ENCODE measurements at regions of chr12 and their contacts with region 1.

Region 1: GRCh38 chr12:113098446-113098896 is 37.1 kb downstream of the RASAL1 start:
- DNase-seq: peak; percentile 83
- CTCF ChIP-seq: peak; percentile 88

Region 2: DNA sequence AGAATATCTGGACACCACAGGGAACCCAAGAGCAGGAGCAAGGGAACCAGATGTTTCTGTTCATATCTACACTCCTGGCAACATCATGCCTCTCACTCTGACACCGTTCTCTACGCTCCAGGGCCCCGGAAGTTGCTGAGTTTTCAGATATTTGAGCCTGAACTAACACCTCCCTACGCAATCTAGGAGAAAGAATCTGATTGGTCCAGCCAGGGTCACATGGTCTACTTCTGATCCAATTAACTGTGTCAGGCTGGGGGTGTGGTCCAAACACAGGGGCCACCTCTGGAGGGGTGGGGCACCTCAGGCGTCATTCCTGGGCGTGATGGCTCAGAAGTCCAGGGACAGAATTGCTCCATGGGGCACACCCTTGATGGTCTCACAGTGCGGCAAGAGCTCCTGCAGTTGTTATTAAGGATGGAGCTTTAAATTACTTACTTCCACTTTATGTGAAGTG is 514.2 kb before region 1 on chr12:
- CTCF ChIA-PET with region 1: no interaction called
- POLR2A ChIA-PET with region 1: no interaction called
- DNase-seq: no peak
- CTCF ChIP-seq: no peak

Region 3: GRCh38 chr12:112950701-112951100 is 147.8 kb before region 1 on chr12:
- CTCF ChIA-PET with region 1: no interaction called
- POLR2A ChIA-PET with region 1: no interaction called
- DNase-seq: no peak
- CTCF ChIP-seq: no peak

Region 4: DNA sequence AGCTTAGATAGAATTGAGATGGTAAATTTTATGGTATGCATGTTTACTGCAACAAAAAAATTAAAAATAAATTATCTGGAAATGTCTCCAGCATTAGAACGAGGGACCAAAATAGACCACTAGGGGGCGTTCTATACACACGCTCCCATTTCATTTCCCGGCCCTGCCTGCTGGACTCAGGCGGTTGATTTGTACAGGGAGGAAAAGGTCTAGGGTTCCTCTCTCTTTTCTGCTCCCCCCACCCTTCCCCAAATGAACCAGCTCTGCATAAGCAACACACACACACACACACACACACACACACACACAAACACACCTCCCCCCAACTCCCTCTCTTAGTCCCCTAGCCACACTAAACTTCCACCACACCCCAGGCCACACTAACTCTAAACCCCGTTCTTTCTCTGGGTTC is 49.7 kb before region 1 on chr12:
- CTCF ChIA-PET with region 1: interaction called, 107 read pairs
- POLR2A ChIA-PET with region 1: no interaction called
- DNase-seq: peak; percentile 76
- CTCF ChIP-seq: peak; percentile 57

Region 5: GRCh38 chr12:113065126-113066007 is 33.1 kb before region 1 on chr12:
- CTCF ChIA-PET with region 1: interaction called, 62 read pairs
- POLR2A ChIA-PET with region 1: no interaction called
- DNase-seq: peak; percentile 67
- CTCF ChIP-seq: no peak

Region 6: GRCh38 chr12:113109872-113110599 is 11.6 kb after region 1 on chr12:
- CTCF ChIA-PET with region 1: interaction called, 14 read pairs
- POLR2A ChIA-PET with region 1: no interaction called
- DNase-seq: no peak
- CTCF ChIP-seq: no peak